H1 (cell line): ENCODE measurements at regions of chr13 and their contacts with region 1.

Region 1: GRCh38 chr13:44637581-44637980 is 61.5 kb upstream of the TSC22D1 start:
- DNase-seq: no peak
- H3K4me3 ChIP-seq: no peak overlapping the region
- H3K27ac ChIP-seq: no peak overlapping the region
- H3K4me1 ChIP-seq: no peaks in the 10 kb centered on the region
- H3K27me3 ChIP-seq: no peaks in the 10 kb centered on the region
- CTCF ChIP-seq: no peak
- EP300 ChIP-seq: no peak
- POLR2A ChIP-seq: no peak
- RAD21 ChIP-seq: no peak

Region 2: GRCh38 chr13:44249431-44249836 is 388.1 kb before region 1 on chr13:
- CTCF ChIA-PET with region 1: no interaction called
- POLR2A ChIA-PET with region 1: no interaction called
- DNase-seq: no peak
- H3K4me3 ChIP-seq: no peak overlapping the region
- H3K27ac ChIP-seq: no peak overlapping the region
- H3K4me1 ChIP-seq: no peaks in the 10 kb centered on the region
- H3K27me3 ChIP-seq: no peaks in the 10 kb centered on the region
- CTCF ChIP-seq: no peak
- EP300 ChIP-seq: no peak
- POLR2A ChIP-seq: no peak
- RAD21 ChIP-seq: no peak

Region 3: DNA sequence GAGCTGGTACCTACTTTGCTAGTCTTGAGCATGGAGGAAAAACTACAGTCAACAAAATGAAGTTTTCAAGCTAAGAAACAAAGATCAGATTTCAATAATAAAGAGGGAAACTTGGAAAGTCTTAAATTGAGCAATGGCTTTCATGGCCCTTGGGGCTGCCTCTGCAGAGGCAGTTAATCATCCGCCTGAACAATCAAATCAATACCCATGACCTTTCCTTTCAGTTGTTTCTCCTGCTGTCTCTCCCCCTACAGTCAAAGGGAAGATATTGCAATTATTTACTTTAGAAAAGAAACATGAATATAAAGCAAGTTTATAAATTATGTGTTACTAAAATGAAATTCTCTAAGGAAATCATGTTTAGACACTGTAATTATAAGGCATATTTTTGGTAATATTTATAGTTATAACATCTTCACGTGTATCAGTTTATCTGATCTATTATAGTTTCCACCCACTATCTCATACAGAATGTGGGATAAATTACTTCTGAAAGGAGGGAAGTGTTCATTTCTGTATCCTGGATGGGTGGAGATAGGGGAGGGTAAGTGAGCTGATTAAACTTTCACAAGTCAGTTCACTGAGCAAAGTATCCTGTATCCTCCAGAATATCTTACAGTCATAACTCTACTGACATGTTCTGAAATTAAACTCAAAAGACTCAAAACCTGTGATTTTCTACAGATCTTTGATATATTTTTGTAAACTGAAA is 11.0 kb after region 1 on chr13:
- CTCF ChIA-PET with region 1: interaction called, 10 read pairs
- POLR2A ChIA-PET with region 1: no interaction called
- DNase-seq: no peak
- H3K4me3 ChIP-seq: peak overlapping the region in 1 of 4 experiments; percentile 42; a peak in 3 of 8 replicates
- H3K27ac ChIP-seq: no peak overlapping the region
- H3K4me1 ChIP-seq: peaks cover 0 to 9% (median 5%) of the 10 kb centered on the region in 4 experiments; a peak in 4 of 7 replicates
- H3K27me3 ChIP-seq: no peaks in the 10 kb centered on the region
- CTCF ChIP-seq: peak in 1 of 3 experiments; percentile 10; a peak in 1 of 4 replicates
- EP300 ChIP-seq: no peak
- POLR2A ChIP-seq: no peak
- RAD21 ChIP-seq: peak; percentile 26 to 29; a peak in 3 of 4 replicates

Region 4: DNA sequence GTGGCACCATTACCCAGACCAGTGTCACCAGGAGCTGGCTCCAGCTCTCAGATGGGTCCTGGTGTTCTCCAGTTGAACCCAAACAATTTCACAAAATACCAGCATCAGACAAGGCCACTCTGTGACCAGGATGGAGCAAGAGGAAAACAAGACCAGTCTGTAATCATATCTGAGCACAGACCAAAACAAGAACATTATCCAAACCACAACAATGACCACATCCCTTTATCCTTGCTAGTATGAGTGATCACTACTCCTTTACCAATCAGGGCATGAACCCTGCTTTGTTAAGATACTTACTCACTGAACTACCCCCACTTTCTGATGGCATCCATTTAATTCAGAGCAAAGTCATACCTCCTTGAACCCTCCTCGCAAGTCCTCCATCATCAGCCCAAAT is 205.8 kb after region 1 on chr13:
- CTCF ChIA-PET with region 1: no interaction called
- POLR2A ChIA-PET with region 1: no interaction called
- DNase-seq: no peak
- H3K4me3 ChIP-seq: no peak overlapping the region
- H3K27ac ChIP-seq: no peak overlapping the region
- H3K4me1 ChIP-seq: no peaks in the 10 kb centered on the region
- H3K27me3 ChIP-seq: no peaks in the 10 kb centered on the region; a peak in 1 of 7 replicates
- CTCF ChIP-seq: no peak
- EP300 ChIP-seq: no peak
- POLR2A ChIP-seq: no peak
- RAD21 ChIP-seq: no peak